ENCODE measurements at regions of chr10 and their contacts with region 1.

Region 1: DNA sequence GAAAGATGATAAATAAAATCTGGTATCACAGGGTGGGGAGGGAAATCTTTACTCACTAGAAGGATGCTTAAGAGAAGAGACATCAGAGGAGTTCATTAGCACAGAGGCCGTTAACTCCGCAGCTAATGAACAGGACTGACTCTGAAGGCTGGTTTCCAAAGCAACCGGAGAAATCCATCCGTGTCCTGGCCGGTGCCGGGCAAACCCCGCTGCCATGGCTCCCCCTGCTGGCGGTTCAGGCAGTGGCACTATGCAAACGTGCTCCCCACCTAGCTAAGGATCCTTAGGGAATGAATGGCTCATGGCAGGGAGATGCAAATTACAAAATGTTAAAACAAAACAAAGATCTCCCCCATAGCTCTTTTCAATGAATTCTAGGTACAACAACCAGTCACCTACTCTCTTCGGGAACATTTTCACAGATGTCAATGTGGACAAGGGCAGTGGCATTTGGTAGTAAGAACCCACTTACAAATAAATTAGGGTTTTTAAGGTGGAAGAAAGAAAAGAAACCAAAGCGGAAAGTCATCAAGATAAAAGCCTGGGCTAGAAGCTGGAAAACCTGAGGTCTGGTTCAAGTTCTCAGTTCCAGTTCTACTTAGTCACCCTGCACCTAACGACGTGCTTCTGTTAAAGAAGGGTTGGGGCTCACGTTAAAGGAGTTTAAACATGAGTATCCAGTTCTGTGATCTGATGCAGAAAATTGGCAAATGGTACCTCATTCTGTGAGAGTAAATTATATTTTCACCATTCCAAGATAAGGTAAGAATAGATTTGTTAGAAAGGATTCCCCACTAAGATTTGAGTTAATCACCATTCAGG is 138.2 kb downstream of the SVIL start:
- DNase-seq: no peak
- ATAC-seq: peak; percentile 98
- H3K4me3 ChIP-seq: no peak overlapping the region
- H3K27ac ChIP-seq: no peak overlapping the region
- H3K4me1 ChIP-seq: no peaks in the 10 kb centered on the region
- H3K27me3 ChIP-seq: no peaks in the 10 kb centered on the region; a peak in 1 of 4 replicates
- CTCF ChIP-seq: peak; percentile 88 to 93 (median 88)
- EP300 ChIP-seq: no peak
- POLR2A ChIP-seq: no peak
- RAD21 ChIP-seq: peak; percentile 74

Region 2: GRCh38 chr10:29377333-29377961 is 119.1 kb before region 1 on chr10:
- CTCF ChIA-PET with region 1: interaction called, 12 read pairs
- POLR2A ChIA-PET with region 1: no interaction called
- RAD21 ChIA-PET with region 1: no interaction called
- SMC1A ChIA-PET with region 1: no interaction called
- in situ Hi-C with region 1: no loop called
- intact Hi-C with region 1: no loop called
- DNase-seq: no peak
- ATAC-seq: peak; percentile 39; the same call in 1 of the 3 replicates
- H3K4me3 ChIP-seq: no peak overlapping the region
- H3K27ac ChIP-seq: no peak overlapping the region
- H3K4me1 ChIP-seq: no peaks in the 10 kb centered on the region
- H3K27me3 ChIP-seq: peaks cover 0 to 2% of the 10 kb centered on the region in 2 experiments; a peak in 1 of 4 replicates
- CTCF ChIP-seq: peak; percentile 45 to 58 (median 47); a peak in 5 of 6 replicates
- EP300 ChIP-seq: no peak
- POLR2A ChIP-seq: no peak
- RAD21 ChIP-seq: peak; percentile 72

Region 3: DNA sequence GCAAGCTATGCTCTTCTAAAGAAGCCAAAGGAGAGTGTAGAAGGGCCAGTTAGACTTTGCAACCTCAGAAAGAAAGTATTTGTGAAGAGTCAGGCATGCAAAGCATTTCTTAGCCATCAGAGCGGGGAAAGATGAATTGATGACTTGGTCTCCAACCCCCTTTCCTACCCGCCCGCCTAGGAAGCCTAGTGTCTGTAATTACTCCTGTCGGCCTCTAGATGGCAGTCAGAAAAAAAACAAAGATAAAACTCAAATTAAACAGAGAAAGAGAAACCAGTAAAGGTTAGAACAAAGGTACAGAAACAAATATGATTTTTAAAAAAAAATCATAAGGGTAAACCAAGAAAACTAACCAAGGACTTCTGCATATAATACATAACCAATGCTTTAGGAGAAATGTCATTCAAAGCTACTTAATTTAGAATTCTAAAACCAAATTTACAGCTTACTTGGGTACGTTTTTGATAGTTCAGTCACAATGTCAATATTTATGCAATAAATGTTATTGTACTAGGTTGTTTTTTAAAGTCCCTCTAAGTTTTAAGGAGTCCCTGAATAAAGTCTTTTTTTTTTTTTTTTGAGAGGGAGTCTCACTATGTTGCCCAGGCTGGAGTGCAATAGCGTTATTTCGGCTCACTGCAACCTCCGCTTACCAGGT is 110.1 kb before region 1 on chr10:
- CTCF ChIA-PET with region 1: interaction called, 11 read pairs
- POLR2A ChIA-PET with region 1: no interaction called
- RAD21 ChIA-PET with region 1: interaction called, 4 read pairs
- SMC1A ChIA-PET with region 1: interaction called, 8 read pairs
- in situ Hi-C with region 1: no loop called
- intact Hi-C with region 1: loop called (anchors 5 kb)
- DNase-seq: no peak
- ATAC-seq: peak; percentile 71
- H3K4me3 ChIP-seq: no peak overlapping the region
- H3K27ac ChIP-seq: no peak overlapping the region
- H3K4me1 ChIP-seq: no peaks in the 10 kb centered on the region
- H3K27me3 ChIP-seq: peaks cover 0 to 2% of the 10 kb centered on the region in 2 experiments; a peak in 1 of 4 replicates
- CTCF ChIP-seq: peak; percentile 48 to 68 (median 61)
- EP300 ChIP-seq: no peak
- POLR2A ChIP-seq: no peak
- RAD21 ChIP-seq: peak; percentile 54

Region 4: GRCh38 chr10:29443745-29444523 is 52.6 kb before region 1 on chr10:
- CTCF ChIA-PET with region 1: interaction called, 16 read pairs
- POLR2A ChIA-PET with region 1: no interaction called
- RAD21 ChIA-PET with region 1: interaction called, 7 read pairs
- SMC1A ChIA-PET with region 1: interaction called, 7 read pairs
- in situ Hi-C with region 1: no loop called
- intact Hi-C with region 1: loop called (anchors 2 kb)
- DNase-seq: no peak
- ATAC-seq: peak; percentile 41
- H3K4me3 ChIP-seq: no peak overlapping the region
- H3K27ac ChIP-seq: no peak overlapping the region
- H3K4me1 ChIP-seq: no peaks in the 10 kb centered on the region
- H3K27me3 ChIP-seq: no peaks in the 10 kb centered on the region
- CTCF ChIP-seq: no peak
- EP300 ChIP-seq: no peak
- POLR2A ChIP-seq: no peak
- RAD21 ChIP-seq: no peak

Region 5: GRCh38 chr10:29470355-29470705 is 26.2 kb before region 1 on chr10:
- CTCF ChIA-PET with region 1: interaction called, 12 read pairs
- POLR2A ChIA-PET with region 1: no interaction called
- RAD21 ChIA-PET with region 1: no interaction called
- SMC1A ChIA-PET with region 1: no interaction called
- in situ Hi-C with region 1: no loop called
- intact Hi-C with region 1: no loop called
- DNase-seq: no peak
- ATAC-seq: no peak
- H3K4me3 ChIP-seq: no peak overlapping the region
- H3K27ac ChIP-seq: no peak overlapping the region
- H3K4me1 ChIP-seq: no peaks in the 10 kb centered on the region
- H3K27me3 ChIP-seq: no peaks in the 10 kb centered on the region
- CTCF ChIP-seq: 0 out of 6 replicates have a peak, but pooled peaks of 1 of the 3 experiments have one; percentile 5
- EP300 ChIP-seq: no peak
- POLR2A ChIP-seq: no peak
- RAD21 ChIP-seq: no peak

Region 6: GRCh38 chr10:29482591-29483431 is 13.7 kb before region 1 on chr10:
- CTCF ChIA-PET with region 1: interaction called, 20 read pairs
- POLR2A ChIA-PET with region 1: no interaction called
- RAD21 ChIA-PET with region 1: interaction called, 5 read pairs
- SMC1A ChIA-PET with region 1: interaction called, 3 read pairs
- in situ Hi-C with region 1: no loop called
- intact Hi-C with region 1: no loop called
- DNase-seq: no peak
- ATAC-seq: peak; percentile 64
- H3K4me3 ChIP-seq: no peak overlapping the region
- H3K27ac ChIP-seq: no peak overlapping the region
- H3K4me1 ChIP-seq: no peaks in the 10 kb centered on the region
- H3K27me3 ChIP-seq: no peaks in the 10 kb centered on the region
- CTCF ChIP-seq: no peak
- EP300 ChIP-seq: no peak
- POLR2A ChIP-seq: no peak
- RAD21 ChIP-seq: no peak

Region 7: GRCh38 chr10:29508554-29509244 is 12.1 kb after region 1 on chr10:
- CTCF ChIA-PET with region 1: interaction called, 32 read pairs
- POLR2A ChIA-PET with region 1: no interaction called
- RAD21 ChIA-PET with region 1: interaction called, 3 read pairs
- SMC1A ChIA-PET with region 1: interaction called, 3 read pairs
- in situ Hi-C with region 1: no loop called
- intact Hi-C with region 1: no loop called
- DNase-seq: no peak
- ATAC-seq: no peak; the same call in 2 of the 3 replicates
- H3K4me3 ChIP-seq: no peak overlapping the region
- H3K27ac ChIP-seq: no peak overlapping the region
- H3K4me1 ChIP-seq: no peaks in the 10 kb centered on the region
- H3K27me3 ChIP-seq: no peaks in the 10 kb centered on the region
- CTCF ChIP-seq: no peak
- EP300 ChIP-seq: no peak
- POLR2A ChIP-seq: no peak
- RAD21 ChIP-seq: no peak

Measured in GM12878 (cell line).